Activated CD4-positive, alpha-beta memory T cell treated with anti-CD3 and anti-CD28 coated beads for 36 hours (primary cell): ENCODE measurements at regions of chr6 and their contacts with region 1.

Region 1: DNA sequence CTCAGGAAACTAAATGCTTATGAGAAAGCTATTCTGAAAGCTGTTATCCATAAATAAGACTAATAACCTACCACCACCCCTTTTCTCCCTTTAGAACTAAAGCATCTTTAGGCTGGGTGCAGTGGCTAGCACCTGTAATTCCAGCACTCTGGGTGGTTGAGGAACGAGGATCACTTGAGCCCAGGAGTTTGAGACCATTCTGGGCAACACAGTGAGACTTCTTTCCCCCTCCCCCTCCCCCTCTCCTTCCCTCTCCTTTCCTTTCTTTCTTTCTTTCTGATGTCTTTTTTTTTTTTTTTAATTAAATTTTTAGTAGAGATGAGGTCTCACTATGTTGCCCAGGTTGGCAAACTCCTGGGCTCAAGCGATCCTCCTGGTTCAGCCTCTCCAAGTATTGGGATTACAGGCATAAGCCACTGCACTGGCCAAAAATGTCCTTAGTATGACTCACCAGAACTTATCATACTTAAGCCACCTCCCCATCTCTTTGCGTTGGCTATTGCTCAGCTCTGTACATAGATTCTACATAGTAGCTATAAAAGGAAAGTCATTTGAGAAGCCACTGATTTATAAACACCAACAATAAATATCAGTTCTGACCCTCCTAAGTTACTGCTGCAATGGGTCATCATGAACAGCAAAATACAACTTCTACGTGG is 54.8 kb upstream of the SPDEF start:
- DNase-seq: no peak
- H3K4me3 Mint-ChIP-seq: no peak overlapping the region
- H3K27ac Mint-ChIP-seq: no peak overlapping the region
- H3K4me1 Mint-ChIP-seq: peaks cover 15% of the 10 kb centered on the region
- H3K27me3 Mint-ChIP-seq: no peaks in the 10 kb centered on the region

Region 2: GRCh38 chr6:34161857-34162515 is 449.0 kb before region 1 on chr6:
- CTCF ChIA-PET with region 1: interaction called, 19 read pairs
- POLR2A ChIA-PET with region 1: no interaction called
- intact Hi-C with region 1: no loop called
- DNase-seq: no peak
- H3K4me3 Mint-ChIP-seq: no peak overlapping the region
- H3K27ac Mint-ChIP-seq: no peak overlapping the region
- H3K4me1 Mint-ChIP-seq: no peaks in the 10 kb centered on the region
- H3K27me3 Mint-ChIP-seq: no peaks in the 10 kb centered on the region

Region 3: DNA sequence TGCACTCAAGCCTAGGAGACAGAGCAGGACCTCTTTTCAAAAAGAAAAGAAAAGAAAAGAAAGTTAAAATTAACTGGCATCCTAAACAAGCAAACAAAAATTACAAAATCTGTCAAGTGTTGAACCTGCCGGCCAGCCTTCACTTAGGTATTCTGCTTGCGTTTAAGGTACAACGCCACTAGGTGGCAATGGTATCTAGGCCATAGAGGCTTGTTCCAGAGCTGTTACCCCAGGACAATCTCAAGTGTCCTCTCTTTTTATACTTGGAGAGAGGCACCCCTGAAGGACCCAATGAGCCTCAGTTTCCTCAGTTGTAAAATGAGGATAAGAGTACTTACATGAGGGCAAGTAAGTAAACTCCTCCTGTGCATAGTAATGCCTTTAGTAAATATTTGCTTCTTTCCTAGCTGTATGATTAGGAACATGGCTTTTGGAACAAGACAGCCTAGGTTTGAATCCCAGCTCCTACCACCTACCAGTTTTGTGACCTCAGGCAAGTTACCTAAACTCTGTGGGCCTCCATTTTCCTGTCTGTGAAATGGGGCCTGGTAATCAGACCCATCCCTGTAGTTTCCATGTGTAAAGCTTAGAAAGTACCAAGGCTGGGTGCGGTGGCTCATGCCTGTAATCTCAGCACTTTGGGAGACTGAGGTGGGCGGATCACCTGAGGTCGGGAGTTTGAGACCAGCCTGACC is 150.9 kb before region 1 on chr6:
- CTCF ChIA-PET with region 1: interaction called, 170 read pairs
- POLR2A ChIA-PET with region 1: interaction called, 4 read pairs
- intact Hi-C with region 1: loop called (anchors 1 kb)
- DNase-seq: peak; percentile 59
- H3K4me3 Mint-ChIP-seq: no peak overlapping the region
- H3K27ac Mint-ChIP-seq: no peak overlapping the region
- H3K4me1 Mint-ChIP-seq: no peaks in the 10 kb centered on the region
- H3K27me3 Mint-ChIP-seq: peaks cover 9% of the 10 kb centered on the region

Region 4: GRCh38 chr6:34526992-34527728 is 83.8 kb before region 1 on chr6:
- CTCF ChIA-PET with region 1: interaction called, 36 read pairs
- POLR2A ChIA-PET with region 1: no interaction called
- intact Hi-C with region 1: loop called (anchors 1 kb)
- DNase-seq: peak; percentile 97
- H3K4me3 Mint-ChIP-seq: no peak overlapping the region
- H3K27ac Mint-ChIP-seq: no peak overlapping the region
- H3K4me1 Mint-ChIP-seq: peaks cover 7% of the 10 kb centered on the region
- H3K27me3 Mint-ChIP-seq: no peaks in the 10 kb centered on the region

Region 5: DNA sequence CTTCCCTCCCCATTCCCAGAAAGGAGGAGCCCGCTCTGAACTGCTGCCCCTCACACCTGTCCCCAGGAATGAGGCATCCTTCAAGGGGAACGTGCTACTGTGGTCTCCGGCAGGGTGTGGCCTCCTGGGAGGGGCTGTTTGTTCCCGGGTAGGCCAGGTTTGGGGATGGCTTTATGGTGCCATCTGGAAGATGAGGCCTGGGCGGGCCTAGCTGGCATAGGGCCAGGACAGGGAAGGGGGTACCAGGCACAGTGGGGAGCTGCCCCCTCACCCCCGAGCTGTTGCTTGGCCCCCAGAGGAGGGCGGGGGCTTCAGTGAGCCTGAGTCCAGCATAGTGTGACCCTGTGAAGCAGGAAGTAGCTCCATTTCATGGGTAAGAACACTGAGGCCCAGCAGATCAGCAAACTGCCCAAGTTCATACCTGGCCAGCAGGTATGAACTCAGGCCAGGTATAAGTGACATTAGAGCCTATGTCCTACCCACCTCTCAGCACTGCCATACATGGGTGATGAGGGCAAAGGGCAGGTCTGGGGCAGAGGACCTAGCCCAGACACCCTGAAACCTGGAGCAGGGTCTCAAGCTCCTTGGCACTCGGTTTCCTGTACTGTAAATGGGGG is 37.3 kb before region 1 on chr6:
- CTCF ChIA-PET with region 1: no interaction called
- POLR2A ChIA-PET with region 1: no interaction called
- intact Hi-C with region 1: no loop called
- DNase-seq: no peak
- H3K4me3 Mint-ChIP-seq: no peak overlapping the region
- H3K27ac Mint-ChIP-seq: no peak overlapping the region
- H3K4me1 Mint-ChIP-seq: no peaks in the 10 kb centered on the region
- H3K27me3 Mint-ChIP-seq: peaks cover 2% of the 10 kb centered on the region

Region 6: GRCh38 chr6:34595332-34596184 is 15.4 kb before region 1 on chr6:
- CTCF ChIA-PET with region 1: interaction called, 37 read pairs
- POLR2A ChIA-PET with region 1: interaction called, 3 read pairs
- intact Hi-C with region 1: no loop called
- DNase-seq: no peak
- H3K4me3 Mint-ChIP-seq: no peak overlapping the region
- H3K27ac Mint-ChIP-seq: no peak overlapping the region
- H3K4me1 Mint-ChIP-seq: peaks cover 25% of the 10 kb centered on the region
- H3K27me3 Mint-ChIP-seq: no peaks in the 10 kb centered on the region

Region 7: GRCh38 chr6:34656378-34657036 is 45.6 kb after region 1 on chr6:
- CTCF ChIA-PET with region 1: interaction called, 10 read pairs
- POLR2A ChIA-PET with region 1: interaction called, 3 read pairs
- intact Hi-C with region 1: no loop called
- DNase-seq: peak; percentile 74
- H3K4me3 Mint-ChIP-seq: peak overlapping the region; percentile 67
- H3K27ac Mint-ChIP-seq: peak overlapping the region; percentile 93
- H3K4me1 Mint-ChIP-seq: peaks cover 54% of the 10 kb centered on the region
- H3K27me3 Mint-ChIP-seq: no peaks in the 10 kb centered on the region